ENCODE measurements at regions of chr12 and their contacts with region 1.

Region 1: DNA sequence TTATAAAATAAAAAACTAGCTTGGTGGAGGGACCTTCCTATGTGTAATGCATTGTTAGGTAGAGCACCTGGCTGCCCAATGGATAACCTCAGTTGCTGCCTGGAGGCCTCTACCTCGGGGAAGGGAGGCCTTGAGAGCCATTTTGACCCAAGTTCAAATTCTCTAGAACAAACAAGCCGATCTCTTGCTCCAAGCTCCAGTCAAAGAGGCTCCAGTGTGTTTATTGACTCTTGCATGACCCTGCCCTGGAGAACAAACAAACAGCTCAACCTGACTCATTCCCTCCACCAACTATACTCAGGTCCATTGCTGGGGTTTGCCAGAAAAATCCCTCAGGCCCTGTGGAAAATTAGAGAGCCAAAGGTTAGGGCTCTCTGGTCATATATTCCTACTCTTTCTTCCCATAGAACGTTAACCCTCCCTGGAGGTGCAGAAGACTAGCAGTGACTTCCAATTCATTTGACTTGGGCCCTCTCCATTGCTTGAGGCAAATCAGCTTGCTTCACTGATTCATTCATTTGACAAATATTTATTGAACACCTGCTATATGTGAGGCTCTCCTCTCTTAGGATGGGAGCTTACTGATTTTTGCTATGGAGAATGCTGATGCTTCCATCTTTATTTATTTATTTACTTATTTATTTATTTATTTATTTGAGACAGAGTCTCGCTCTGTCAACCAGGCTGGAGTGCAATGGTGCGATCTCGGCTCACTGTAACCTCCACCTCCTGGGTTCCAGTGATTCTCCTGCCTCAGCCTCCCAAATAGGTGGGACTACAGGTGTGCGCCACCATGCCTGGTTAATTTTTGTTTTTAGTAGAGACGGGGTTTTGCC is 73.7 kb upstream of the CISTR start:
- DNase-seq: peak; percentile 99
- ATAC-seq: peak; percentile 99
- H3K4me3 ChIP-seq: 0 out of 6 replicates have a peak overlapping the region, but pooled peaks of 1 of the 3 experiments have one; percentile 32
- H3K27ac ChIP-seq: peak overlapping the region; percentile 64
- H3K4me1 ChIP-seq: peaks cover 50% of the 10 kb centered on the region
- H3K27me3 ChIP-seq: no peaks in the 10 kb centered on the region
- CTCF ChIP-seq: 0 out of 2 replicates have a peak, but pooled peaks have one; percentile 2
- EP300 ChIP-seq: peak; percentile 90 to 98; a peak in 3 of 4 replicates
- POLR2A ChIP-seq: no peak
- RAD21 ChIP-seq: peak; percentile 28; the same call in 1 of the 2 replicates

Region 2: GRCh38 chr12:53798575-53798974 is 26.9 kb before region 1 on chr12:
- CTCF ChIA-PET with region 1: no interaction called
- POLR2A ChIA-PET with region 1: interaction called, 41 read pairs
- in situ Hi-C with region 1: no loop called
- intact Hi-C with region 1: loop called (anchors 1 kb)
- DNase-seq: peak; percentile 97
- ATAC-seq: peak; percentile 99
- H3K4me3 ChIP-seq: no peak overlapping the region
- H3K27ac ChIP-seq: peak overlapping the region; percentile 69
- H3K4me1 ChIP-seq: peaks cover 36% of the 10 kb centered on the region
- H3K27me3 ChIP-seq: no peaks in the 10 kb centered on the region
- CTCF ChIP-seq: no peak
- EP300 ChIP-seq: peak; percentile 56 to 89; a peak in 3 of 4 replicates
- POLR2A ChIP-seq: no peak; a peak in 1 of 4 replicates
- RAD21 ChIP-seq: no peak